ENCODE measurements at regions of chr1 and their contacts with region 1.

Region 1: DNA sequence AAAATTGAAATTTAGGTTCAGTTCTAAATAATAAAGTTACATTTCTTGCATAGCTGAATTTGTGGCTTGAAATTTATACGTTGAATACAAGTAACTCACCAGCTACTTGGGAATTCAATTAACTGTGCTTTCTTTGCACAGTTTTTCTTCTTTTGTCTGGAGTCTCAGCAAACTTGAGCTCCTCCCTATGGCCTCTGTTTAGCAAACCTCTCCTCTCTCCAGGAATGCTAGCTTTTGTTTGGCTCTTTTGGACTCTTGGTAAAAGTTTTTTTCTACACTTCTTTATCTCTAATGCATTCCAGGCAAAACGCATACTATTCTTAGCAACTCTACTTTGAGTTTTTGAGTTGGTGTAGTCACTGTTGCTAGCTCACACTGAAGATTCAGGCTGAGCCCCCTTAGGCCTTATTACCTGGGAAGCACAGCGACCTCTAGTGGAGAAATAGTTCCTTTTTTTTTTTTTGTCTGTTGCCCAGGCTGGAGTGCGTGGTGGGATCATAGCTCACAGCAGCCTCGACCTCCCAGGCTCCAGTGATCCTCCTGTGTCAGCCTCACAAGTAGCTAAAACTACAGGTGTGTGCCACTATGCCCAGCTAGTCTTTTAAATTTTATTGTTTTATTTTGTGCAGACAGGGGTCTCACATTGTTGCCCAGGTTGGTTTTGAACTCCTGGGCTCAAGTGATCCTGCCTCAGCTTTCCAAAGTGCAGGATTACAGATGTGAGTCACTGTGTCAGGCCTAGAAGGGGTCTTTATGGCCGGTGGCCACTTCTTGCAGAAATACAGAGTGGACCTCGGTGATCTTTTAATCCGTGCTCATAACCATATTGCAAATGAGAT is 61.7 kb downstream of the CASQ2 start:
- DNase-seq: no peak
- H3K4me3 ChIP-seq: no peak overlapping the region
- H3K27ac ChIP-seq: no peak overlapping the region
- H3K4me1 ChIP-seq: no peaks in the 10 kb centered on the region
- H3K27me3 ChIP-seq: no peaks in the 10 kb centered on the region
- CTCF ChIP-seq: peak in 2 of 3 experiments; percentile 64 to 70; a peak in 3 of 4 replicates
- EP300 ChIP-seq: no peak
- POLR2A ChIP-seq: no peak
- RAD21 ChIP-seq: peak; percentile 66 to 74

Region 2: GRCh38 chr1:115577513-115577912 is 129.3 kb before region 1 on chr1:
- CTCF ChIA-PET with region 1: no interaction called
- POLR2A ChIA-PET with region 1: no interaction called
- DNase-seq: no peak
- H3K4me3 ChIP-seq: no peak overlapping the region
- H3K27ac ChIP-seq: no peak overlapping the region
- H3K4me1 ChIP-seq: no peaks in the 10 kb centered on the region
- H3K27me3 ChIP-seq: no peaks in the 10 kb centered on the region
- CTCF ChIP-seq: no peak
- EP300 ChIP-seq: no peak
- POLR2A ChIP-seq: no peak
- RAD21 ChIP-seq: no peak

Region 3: GRCh38 chr1:115660151-115660550 is 46.7 kb before region 1 on chr1:
- CTCF ChIA-PET with region 1: interaction called, 14 read pairs
- POLR2A ChIA-PET with region 1: no interaction called
- DNase-seq: no peak
- H3K4me3 ChIP-seq: no peak overlapping the region
- H3K27ac ChIP-seq: no peak overlapping the region; the same call in 1 of the 2 replicates
- H3K4me1 ChIP-seq: peaks cover 0 to 15% (median 9%) of the 10 kb centered on the region in 4 experiments; a peak in 6 of 7 replicates
- H3K27me3 ChIP-seq: no peaks in the 10 kb centered on the region
- CTCF ChIP-seq: no peak
- EP300 ChIP-seq: no peak
- POLR2A ChIP-seq: no peak
- RAD21 ChIP-seq: no peak

Region 4: DNA sequence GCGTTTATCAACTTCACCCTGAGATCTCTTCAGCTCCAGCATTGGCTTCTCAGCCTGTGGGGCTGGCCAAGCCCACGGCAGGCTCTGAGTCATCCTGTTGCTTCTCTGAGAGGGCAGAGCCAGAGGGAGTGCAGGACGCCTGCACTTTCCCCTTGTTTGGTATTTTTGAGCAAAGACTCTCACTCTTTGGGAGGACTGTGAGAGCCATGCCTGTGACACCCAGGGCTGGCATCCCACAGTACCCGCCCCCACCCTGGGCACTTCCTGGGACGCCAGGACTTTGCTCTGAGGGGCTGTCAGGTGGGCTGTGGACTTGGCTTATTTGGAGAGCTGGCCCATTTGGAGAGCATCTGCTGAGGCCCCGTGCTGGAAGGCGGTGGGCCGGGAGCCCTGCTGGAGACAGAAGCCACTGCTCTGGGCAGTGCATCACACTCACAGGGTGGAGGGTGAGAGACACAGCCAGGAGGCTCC is 27.6 kb before region 1 on chr1:
- CTCF ChIA-PET with region 1: interaction called, 15 read pairs
- POLR2A ChIA-PET with region 1: no interaction called
- DNase-seq: no peak
- H3K4me3 ChIP-seq: no peak overlapping the region
- H3K27ac ChIP-seq: no peak overlapping the region
- H3K4me1 ChIP-seq: peaks cover 0 to 2% (median 0%) of the 10 kb centered on the region in 4 experiments; a peak in 2 of 7 replicates
- H3K27me3 ChIP-seq: no peaks in the 10 kb centered on the region
- CTCF ChIP-seq: no peak
- EP300 ChIP-seq: no peak
- POLR2A ChIP-seq: no peak
- RAD21 ChIP-seq: no peak

Region 5: GRCh38 chr1:115694805-115695204 is 12.0 kb before region 1 on chr1:
- CTCF ChIA-PET with region 1: interaction called, 44 read pairs
- POLR2A ChIA-PET with region 1: no interaction called
- DNase-seq: no peak
- H3K4me3 ChIP-seq: no peak overlapping the region
- H3K27ac ChIP-seq: no peak overlapping the region
- H3K4me1 ChIP-seq: peaks cover 0 to 3% (median 1%) of the 10 kb centered on the region in 4 experiments; a peak in 3 of 7 replicates
- H3K27me3 ChIP-seq: no peaks in the 10 kb centered on the region
- CTCF ChIP-seq: no peak
- EP300 ChIP-seq: no peak
- POLR2A ChIP-seq: no peak
- RAD21 ChIP-seq: peak in 1 of 2 experiments; percentile 4; a peak in 1 of 4 replicates

Region 6: GRCh38 chr1:115717541-115717940 is 10.7 kb after region 1 on chr1:
- CTCF ChIA-PET with region 1: interaction called, 41 read pairs
- POLR2A ChIA-PET with region 1: no interaction called
- DNase-seq: peak in 1 of 2 experiments; percentile 81
- H3K4me3 ChIP-seq: no peak overlapping the region
- H3K27ac ChIP-seq: no peak overlapping the region
- H3K4me1 ChIP-seq: peaks cover 0 to 4% (median 0%) of the 10 kb centered on the region in 4 experiments; a peak in 3 of 7 replicates
- H3K27me3 ChIP-seq: no peaks in the 10 kb centered on the region
- CTCF ChIP-seq: peak; percentile 35 to 83 (median 68)
- EP300 ChIP-seq: no peak
- POLR2A ChIP-seq: no peak
- RAD21 ChIP-seq: peak; percentile 85 to 92

Region 7: DNA sequence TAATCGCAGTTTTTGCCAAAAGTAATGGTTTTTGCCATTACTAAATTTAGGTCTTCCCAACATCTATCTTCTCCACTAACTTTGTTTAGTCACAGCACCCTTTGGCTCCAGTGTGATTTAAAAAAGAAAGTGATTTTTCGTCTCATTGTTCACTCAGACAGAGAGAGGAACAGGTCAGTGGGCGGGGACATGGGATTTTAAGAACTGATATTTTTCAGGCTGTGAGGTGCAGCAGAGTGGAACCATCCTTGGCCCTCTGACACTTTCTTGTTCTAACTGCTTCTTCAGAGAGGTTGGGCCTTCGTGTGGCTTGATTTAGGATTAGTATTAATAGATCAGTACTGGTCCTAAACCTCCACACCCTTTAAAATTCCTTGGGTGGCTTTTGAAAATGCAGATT is 22.9 kb after region 1 on chr1:
- CTCF ChIA-PET with region 1: interaction called, 10 read pairs
- POLR2A ChIA-PET with region 1: no interaction called
- DNase-seq: no peak
- H3K4me3 ChIP-seq: no peak overlapping the region
- H3K27ac ChIP-seq: no peak overlapping the region
- H3K4me1 ChIP-seq: no peaks in the 10 kb centered on the region
- H3K27me3 ChIP-seq: no peaks in the 10 kb centered on the region
- CTCF ChIP-seq: no peak
- EP300 ChIP-seq: no peak
- POLR2A ChIP-seq: no peak
- RAD21 ChIP-seq: no peak

Region 8: DNA sequence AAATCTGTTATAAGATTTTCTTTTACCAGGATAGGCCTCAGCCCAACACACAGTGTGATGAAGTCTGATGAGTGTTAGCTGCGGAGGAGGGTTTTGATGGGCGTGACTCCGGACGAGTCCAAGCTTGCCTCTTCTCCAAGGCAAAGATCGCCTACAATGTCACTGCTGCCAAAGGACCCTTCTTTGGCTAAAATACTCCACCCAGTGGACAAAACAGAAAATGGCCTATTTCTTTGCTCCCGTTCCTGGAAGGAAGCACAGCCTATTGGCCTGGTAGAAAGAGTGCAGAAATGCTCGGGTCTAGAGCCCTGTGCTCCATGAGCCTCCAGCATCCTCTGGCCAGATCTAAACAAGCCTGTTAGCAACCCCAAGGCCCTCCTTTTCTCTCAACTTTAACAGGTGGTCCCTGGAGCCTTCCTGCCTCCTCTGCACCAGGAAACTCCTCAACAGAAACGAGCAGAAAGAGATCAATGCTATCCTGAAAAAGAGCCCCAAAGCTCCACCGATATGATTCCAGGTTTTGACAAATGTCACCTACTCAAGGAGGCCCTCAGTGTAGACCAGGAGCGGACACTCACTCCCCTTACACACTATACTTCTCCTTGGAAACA is 65.1 kb after region 1 on chr1:
- CTCF ChIA-PET with region 1: interaction called, 370 read pairs
- POLR2A ChIA-PET with region 1: no interaction called
- DNase-seq: peak; percentile 53 to 72
- H3K4me3 ChIP-seq: peak overlapping the region in 3 of 4 experiments; percentile 13 to 47 (median 30); a peak in 4 of 8 replicates
- H3K27ac ChIP-seq: no peak overlapping the region
- H3K4me1 ChIP-seq: no peaks in the 10 kb centered on the region; a peak in 2 of 7 replicates
- H3K27me3 ChIP-seq: no peaks in the 10 kb centered on the region
- CTCF ChIP-seq: peak in 2 of 3 experiments; percentile 91 to 93; a peak in 3 of 4 replicates
- EP300 ChIP-seq: no peak
- POLR2A ChIP-seq: peak in 1 of 2 experiments; percentile 48; a peak in 1 of 3 replicates
- RAD21 ChIP-seq: peak; percentile 91 to 93